Dendritic cell treated with granulocyte-macrophage colony-stimulating factor and Interleukin-4, amounts not matched to agents 40 ng/mL and 50 ng/mL, for 4 days (primary cell): ENCODE measurements at regions of chr14 and their contacts with region 1.

Region 1: GRCh38 chr14:103808403-103809001 is 38.9 kb downstream of the PPP1R13B start:
- H3K4me3 Mint-ChIP-seq: no peak overlapping the region
- H3K27ac Mint-ChIP-seq: no peak overlapping the region
- H3K4me1 Mint-ChIP-seq: no peaks in the 10 kb centered on the region
- H3K27me3 Mint-ChIP-seq: peaks cover 14% of the 10 kb centered on the region

Region 2: DNA sequence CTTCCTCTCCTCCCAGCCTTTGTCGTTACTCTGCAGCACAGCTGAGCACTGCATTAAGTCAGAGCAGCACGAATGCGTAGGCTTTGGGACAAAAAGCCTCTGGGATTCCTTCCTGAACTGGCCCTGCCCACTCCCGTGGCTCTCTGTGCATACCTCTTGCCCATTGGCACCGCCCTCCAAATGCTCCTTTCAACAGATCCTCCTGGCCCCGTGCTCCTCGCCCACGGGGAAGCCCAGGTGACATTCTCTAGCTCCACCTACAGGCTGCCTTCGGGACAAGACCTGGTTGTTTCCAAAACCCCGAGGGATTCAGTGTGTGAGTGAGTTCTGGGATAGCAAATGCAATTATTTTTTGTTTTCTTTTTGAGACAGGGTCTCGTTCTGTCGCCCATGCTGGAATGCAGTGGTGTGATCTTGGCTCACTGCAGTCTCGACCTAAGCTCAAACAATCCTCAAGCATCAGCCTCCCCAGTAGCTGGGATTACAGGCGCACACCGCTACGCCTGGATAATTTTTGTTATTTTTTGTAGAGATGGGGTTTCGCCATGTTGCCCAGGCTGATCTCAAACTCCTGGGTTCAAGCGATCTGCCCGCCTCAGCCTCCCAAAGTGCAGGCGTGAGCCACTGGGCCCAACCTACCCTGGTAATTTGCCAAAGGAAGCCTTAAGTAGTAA is 101.9 kb after region 1 on chr14:
- intact Hi-C with region 1: loop called (anchors 5 kb)
- H3K4me3 Mint-ChIP-seq: peak overlapping the region; percentile 11
- H3K27ac Mint-ChIP-seq: no peak overlapping the region
- H3K4me1 Mint-ChIP-seq: peaks cover 14% of the 10 kb centered on the region
- H3K27me3 Mint-ChIP-seq: peaks cover 3% of the 10 kb centered on the region